MCF 10A (cell line): ENCODE measurements at regions of chr4 and their contacts with region 1.

Region 1: DNA sequence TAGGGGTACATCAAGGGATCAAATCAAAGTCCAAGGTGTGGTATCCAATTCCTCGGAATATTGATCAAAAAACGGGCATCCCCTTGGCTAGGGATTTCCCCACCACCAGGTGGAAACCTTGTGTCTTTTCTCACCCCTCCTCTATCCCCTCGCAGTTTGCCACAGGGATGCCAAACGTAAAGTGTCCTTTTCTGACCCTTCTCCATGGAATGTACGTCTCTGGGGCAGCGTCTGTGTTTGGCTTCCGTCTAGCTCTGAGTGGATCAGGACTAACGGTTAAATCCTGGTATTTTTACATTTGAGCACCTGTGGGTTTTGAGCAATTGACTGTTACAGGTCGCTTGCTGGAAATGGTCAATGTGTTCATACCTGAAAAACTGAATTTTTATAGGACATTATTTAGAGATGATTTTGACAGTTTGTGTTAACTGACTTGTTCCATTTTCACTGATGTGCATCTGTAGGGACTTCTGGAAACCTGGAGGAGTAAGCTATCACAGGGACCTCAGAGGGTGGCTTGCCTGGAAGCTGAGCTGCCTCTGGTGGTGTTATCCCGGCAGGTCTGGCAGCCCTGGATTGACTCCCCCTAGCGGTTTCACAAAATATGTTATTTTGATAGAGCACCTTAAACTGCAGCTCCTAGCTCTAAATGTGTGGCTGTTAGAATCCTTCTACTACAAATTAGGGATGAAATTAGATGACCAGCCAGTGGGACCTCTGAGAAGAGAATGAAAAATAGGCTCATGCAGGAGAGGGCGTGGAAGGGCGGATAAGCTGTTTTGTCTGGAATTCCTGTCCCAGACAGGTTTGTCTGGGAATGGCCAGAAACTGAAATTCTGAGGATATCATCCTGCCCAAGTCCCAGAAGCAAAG is 8.8 kb upstream of the MGST2 start:
- DNase-seq: peak; percentile 83
- H3K4me3 Mint-ChIP-seq: peak overlapping the region; percentile 64
- H3K27ac Mint-ChIP-seq: peak overlapping the region; percentile 85
- H3K4me1 Mint-ChIP-seq: peaks cover 25% of the 10 kb centered on the region
- H3K27me3 Mint-ChIP-seq: no peaks in the 10 kb centered on the region
- CTCF ChIP-seq: peak; percentile 63

Region 2: GRCh38 chr4:139554893-139555704 is 101.8 kb before region 1 on chr4:
- CTCF ChIA-PET with region 1: interaction called, 3 read pairs
- POLR2A ChIA-PET with region 1: interaction called, 20 read pairs
- intact Hi-C with region 1: no loop called
- DNase-seq: peak; percentile 89
- H3K4me3 Mint-ChIP-seq: peak overlapping the region; percentile 82
- H3K27ac Mint-ChIP-seq: peak overlapping the region; percentile 73
- H3K4me1 Mint-ChIP-seq: peaks cover 25% of the 10 kb centered on the region
- H3K27me3 Mint-ChIP-seq: no peaks in the 10 kb centered on the region
- CTCF ChIP-seq: no peak

Region 3: DNA sequence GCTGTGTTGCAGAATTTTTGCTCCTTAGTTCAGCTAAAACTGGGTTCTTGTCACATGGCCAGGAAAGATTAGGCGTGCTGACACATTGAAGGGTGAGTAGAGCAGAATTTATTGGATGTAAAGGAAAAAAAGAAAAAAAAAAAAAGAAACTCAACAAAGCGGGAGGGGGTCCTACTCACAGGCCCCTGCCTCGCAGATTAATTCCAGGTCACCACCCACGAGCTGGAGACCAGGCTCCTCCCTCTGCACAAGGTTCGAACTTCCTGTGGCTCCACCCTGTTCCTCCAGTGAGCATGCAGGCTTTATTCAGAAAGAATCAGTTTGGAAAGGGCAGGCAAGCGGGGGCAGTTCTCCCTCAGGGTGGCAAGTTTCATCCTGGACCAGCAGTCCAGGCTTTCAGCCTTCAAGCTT is 25.9 kb after region 1 on chr4:
- CTCF ChIA-PET with region 1: interaction called, 11 read pairs
- POLR2A ChIA-PET with region 1: interaction called, 8 read pairs
- intact Hi-C with region 1: no loop called
- DNase-seq: no peak
- H3K4me3 Mint-ChIP-seq: peak overlapping the region; percentile 22
- H3K27ac Mint-ChIP-seq: peak overlapping the region; percentile 29
- H3K4me1 Mint-ChIP-seq: peaks cover 23% of the 10 kb centered on the region
- H3K27me3 Mint-ChIP-seq: no peaks in the 10 kb centered on the region
- CTCF ChIP-seq: no peak

Region 4: DNA sequence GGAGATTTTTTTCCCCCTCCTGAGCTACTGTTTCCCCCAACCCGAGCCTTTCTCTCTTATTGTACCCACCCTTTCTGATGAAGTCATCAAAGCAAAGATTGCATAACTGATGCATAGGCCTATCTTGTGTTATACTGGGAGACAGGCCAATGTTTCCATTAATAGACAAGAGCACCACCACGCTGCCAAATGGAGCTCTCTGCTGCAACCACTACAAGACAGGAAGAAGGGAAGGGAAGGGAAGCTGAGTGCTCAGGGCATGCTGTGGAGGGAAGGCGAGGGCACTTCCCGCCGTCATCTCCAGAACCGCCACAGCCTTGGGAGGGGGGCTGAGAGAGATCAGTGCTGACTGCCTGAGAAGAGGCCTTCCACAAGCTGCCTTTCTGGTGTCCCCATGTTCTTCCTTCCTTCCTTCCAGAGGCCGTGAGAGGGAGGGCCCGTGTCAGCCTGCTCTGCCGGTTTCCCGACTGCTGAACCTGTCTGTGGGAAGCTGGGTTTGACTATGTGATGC is 83.7 kb after region 1 on chr4:
- CTCF ChIA-PET with region 1: interaction called, 55 read pairs
- POLR2A ChIA-PET with region 1: interaction called, 13 read pairs
- intact Hi-C with region 1: loop called (anchors 1 kb)
- DNase-seq: peak; percentile 93
- H3K4me3 Mint-ChIP-seq: no peak overlapping the region
- H3K27ac Mint-ChIP-seq: no peak overlapping the region
- H3K4me1 Mint-ChIP-seq: peaks cover 7% of the 10 kb centered on the region
- H3K27me3 Mint-ChIP-seq: no peaks in the 10 kb centered on the region
- CTCF ChIP-seq: peak; percentile 21

Region 5: DNA sequence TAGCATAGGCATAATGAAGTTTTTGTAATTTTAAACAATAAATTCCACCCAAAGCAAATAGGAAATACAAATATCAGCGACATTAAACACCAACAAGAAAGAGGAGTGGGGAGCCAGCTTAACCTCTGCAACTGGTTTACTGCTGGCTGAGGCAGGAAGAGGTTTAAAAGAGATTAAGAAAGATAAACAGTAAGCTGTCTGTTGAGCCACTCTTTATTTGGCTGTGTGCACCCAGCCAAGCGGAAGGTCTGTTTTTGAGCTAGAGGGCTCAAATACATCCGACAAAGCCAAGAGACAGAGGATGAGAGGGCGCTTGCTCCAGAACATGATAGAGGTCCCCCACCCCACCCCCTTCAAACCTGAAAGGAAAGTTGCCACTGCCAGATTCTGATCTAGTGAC is 200.2 kb after region 1 on chr4:
- CTCF ChIA-PET with region 1: no interaction called
- POLR2A ChIA-PET with region 1: no interaction called
- intact Hi-C with region 1: no loop called
- DNase-seq: no peak
- H3K4me3 Mint-ChIP-seq: no peak overlapping the region
- H3K27ac Mint-ChIP-seq: no peak overlapping the region
- H3K4me1 Mint-ChIP-seq: peaks cover 5% of the 10 kb centered on the region
- H3K27me3 Mint-ChIP-seq: no peaks in the 10 kb centered on the region
- CTCF ChIP-seq: no peak

Region 6: DNA sequence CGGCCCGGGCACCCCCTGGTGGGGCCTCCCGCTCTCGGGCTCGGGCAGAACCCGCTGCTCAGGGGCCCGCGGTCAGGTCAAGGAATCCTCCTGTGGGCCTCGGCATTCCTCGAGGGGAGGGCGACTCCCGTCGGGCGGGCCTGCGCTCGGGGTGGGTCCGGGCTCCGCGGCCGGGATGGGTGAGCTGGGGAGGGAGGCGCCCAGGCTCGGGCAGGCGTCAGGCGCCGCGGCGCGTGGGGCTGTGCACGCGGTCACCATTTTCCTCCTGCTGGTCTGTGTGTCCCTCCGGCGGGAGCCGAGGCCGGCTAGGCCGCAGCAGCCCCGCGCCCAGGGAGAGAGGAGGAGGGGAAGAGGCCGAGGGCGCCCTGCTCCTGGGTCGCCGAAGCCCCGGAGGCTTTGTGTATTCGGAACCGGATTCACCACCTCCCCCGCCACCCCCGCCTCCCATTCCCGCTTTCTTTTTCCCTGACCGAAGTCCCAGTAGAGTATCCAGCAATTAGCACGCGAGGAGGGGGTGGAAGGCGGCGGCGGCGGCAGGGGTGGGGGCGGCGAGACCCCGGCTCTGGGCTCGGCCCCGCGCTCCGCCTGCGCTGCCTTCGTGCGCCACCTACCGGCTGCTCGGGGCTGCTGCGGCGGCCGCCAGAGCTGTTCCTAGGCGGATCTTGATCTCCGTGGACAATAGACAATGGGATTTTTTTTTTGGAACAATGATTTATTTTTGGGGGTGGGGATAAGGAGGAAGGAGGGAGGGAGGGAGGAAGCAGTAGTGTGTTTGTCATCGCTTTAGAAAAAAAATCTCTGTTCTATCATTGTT is 596.1 kb after region 1 on chr4:
- CTCF ChIA-PET with region 1: interaction called, 26 read pairs
- POLR2A ChIA-PET with region 1: interaction called, 5 read pairs
- intact Hi-C with region 1: loop called (anchors 1 kb)
- DNase-seq: peak; percentile 60
- H3K4me3 Mint-ChIP-seq: peak overlapping the region; percentile 59
- H3K27ac Mint-ChIP-seq: no peak overlapping the region
- H3K4me1 Mint-ChIP-seq: peaks cover 22% of the 10 kb centered on the region
- H3K27me3 Mint-ChIP-seq: no peaks in the 10 kb centered on the region
- CTCF ChIP-seq: peak; percentile 97